ENCODE measurements at regions of chr1 and their contacts with region 1.

Region 1: GRCh38 chr1:28886731-28887418 is 27.5 kb upstream of the EPB41 start:
- DNase-seq: peak; percentile 93 to 94
- ATAC-seq: peak; percentile 68 to 84 (median 74)
- H3K4me3 ChIP-seq: peak overlapping the region; percentile 97
- H3K4me3 Mint-ChIP-seq: peak overlapping the region; percentile 89
- H3K27ac ChIP-seq: peak overlapping the region; percentile 84
- H3K27ac Mint-ChIP-seq: peak overlapping the region; percentile 88 to 93
- H3K4me1 ChIP-seq: peaks cover 41% of the 10 kb centered on the region
- H3K4me1 Mint-ChIP-seq: peaks cover 53 to 63% of the 10 kb centered on the region in 2 donors
- H3K27me3 ChIP-seq: no peaks in the 10 kb centered on the region
- H3K27me3 Mint-ChIP-seq: no peaks in the 10 kb centered on the region
- CTCF ChIP-seq: no peak

Region 2: DNA sequence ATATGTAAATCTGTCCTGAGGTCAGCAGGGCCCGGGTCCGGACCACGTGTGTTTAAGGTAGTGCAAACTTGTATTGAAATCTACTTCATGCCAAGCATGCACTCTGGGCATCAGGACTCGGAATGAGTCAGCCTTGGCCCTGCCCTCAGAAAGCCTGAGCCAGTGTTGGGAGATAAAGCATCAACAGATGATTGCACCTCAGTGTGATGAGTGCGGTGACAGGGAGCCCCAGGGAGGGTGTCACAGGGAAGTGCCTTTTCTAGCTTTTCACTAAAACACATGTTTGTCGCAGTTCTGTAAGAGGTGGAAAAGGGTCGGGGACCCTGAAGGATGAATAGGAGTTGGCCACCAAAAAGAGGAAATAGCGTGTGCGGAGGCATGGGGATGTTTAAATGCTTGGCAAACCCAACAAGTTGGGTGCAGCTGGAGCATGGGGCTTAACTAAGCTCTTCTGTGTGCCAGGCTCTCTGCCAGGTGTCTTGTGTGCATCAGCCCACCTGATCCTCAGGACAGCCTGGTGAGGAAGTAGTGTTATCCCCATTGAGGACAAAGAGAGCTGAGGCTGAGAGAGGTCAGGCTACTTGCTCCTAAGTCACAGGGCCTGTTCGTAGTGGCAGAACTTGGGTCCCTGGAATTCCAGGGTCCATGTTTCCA is 20.8 kb before region 1 on chr1:
- intact Hi-C with region 1: no loop called
- DNase-seq: no peak
- ATAC-seq: no peak
- H3K4me3 ChIP-seq: no peak overlapping the region
- H3K4me3 Mint-ChIP-seq: no peak overlapping the region
- H3K27ac ChIP-seq: no peak overlapping the region
- H3K27ac Mint-ChIP-seq: no peak overlapping the region
- H3K4me1 ChIP-seq: no peaks in the 10 kb centered on the region
- H3K4me1 Mint-ChIP-seq: no peaks in the 10 kb centered on the region
- H3K27me3 ChIP-seq: no peaks in the 10 kb centered on the region
- H3K27me3 Mint-ChIP-seq: peaks cover 8 to 10% of the 10 kb centered on the region in 2 donors
- CTCF ChIP-seq: no peak

Region 3: DNA sequence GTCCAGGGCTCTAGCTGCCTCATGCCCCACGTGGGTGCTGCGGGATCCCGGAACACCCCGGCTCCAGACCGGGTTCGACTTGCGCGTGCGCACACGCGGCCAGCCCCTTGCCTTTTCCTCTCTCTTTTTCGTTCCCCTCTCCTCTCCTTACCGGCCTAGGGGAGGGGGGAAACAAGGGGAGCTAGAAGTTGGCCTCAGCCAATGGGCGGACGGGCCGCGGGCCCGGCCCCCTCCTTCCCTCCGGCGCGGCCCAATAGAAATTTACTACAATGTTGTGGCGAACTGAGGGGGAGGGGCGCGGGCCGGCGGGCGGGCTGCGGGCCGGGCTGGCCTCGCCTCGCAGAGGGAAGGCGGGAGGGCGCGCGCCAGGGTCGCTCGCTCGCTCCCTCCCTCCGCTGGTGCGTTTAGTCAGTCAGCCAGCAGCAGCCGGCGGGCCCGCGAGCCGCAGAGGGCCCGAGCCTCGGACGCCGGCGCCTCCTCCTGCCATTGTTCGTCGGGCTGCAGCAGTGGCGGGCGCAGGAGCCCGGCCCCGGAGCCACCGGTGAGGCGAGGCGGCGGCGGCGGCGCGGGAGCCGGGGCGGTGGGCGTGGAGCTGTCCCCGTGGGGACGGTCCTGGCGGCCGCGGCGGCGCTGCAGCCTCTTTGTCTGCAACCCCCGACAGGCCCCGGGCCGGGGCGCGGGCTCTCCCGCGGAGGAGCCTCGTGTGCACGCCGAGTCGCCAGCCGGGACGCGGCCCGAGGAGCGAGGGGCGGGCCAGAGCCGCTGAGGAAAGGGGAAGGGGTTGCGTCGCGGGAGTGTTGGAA is 27.6 kb after region 1 on chr1 and contains the start of gene EPB41:
- intact Hi-C with region 1: loop called (anchors 1 kb)
- DNase-seq: peak; percentile 89 to 93
- ATAC-seq: peak; percentile 89 to 95 (median 91)
- H3K4me3 ChIP-seq: peak within 1 kb of the TSS; percentile 97
- H3K4me3 Mint-ChIP-seq: peak within 1 kb of the TSS; percentile 93
- H3K27ac ChIP-seq: peak within 1 kb of the TSS; percentile 64
- H3K27ac Mint-ChIP-seq: peak within 1 kb of the TSS; percentile 86 to 90
- H3K4me1 ChIP-seq: peaks cover 36% of the 10 kb centered on the region
- H3K4me1 Mint-ChIP-seq: peaks cover 44 to 47% of the 10 kb centered on the region in 2 donors
- H3K27me3 ChIP-seq: no peaks in the 10 kb centered on the region
- H3K27me3 Mint-ChIP-seq: no peaks in the 10 kb centered on the region
- CTCF ChIP-seq: no peak
- total RNA-seq, gene EPB41: 151 to 196 (median 172) TPM

Region 4: GRCh38 chr1:28983509-28984310 is 96.8 kb after region 1 on chr1:
- intact Hi-C with region 1: loop called (anchors 1 kb)
- DNase-seq: peak in 1 of 2 donors; percentile 44
- ATAC-seq: peak in 1 of 3 donors; percentile 42
- H3K4me3 ChIP-seq: no peak overlapping the region
- H3K4me3 Mint-ChIP-seq: no peak overlapping the region
- H3K27ac ChIP-seq: no peak overlapping the region
- H3K27ac Mint-ChIP-seq: peak overlapping the region; percentile 21 to 48
- H3K4me1 ChIP-seq: peaks cover 8% of the 10 kb centered on the region
- H3K4me1 Mint-ChIP-seq: peaks cover 54 to 61% of the 10 kb centered on the region in 2 donors
- H3K27me3 ChIP-seq: no peaks in the 10 kb centered on the region
- H3K27me3 Mint-ChIP-seq: no peaks in the 10 kb centered on the region
- CTCF ChIP-seq: no peak

Region 5: DNA sequence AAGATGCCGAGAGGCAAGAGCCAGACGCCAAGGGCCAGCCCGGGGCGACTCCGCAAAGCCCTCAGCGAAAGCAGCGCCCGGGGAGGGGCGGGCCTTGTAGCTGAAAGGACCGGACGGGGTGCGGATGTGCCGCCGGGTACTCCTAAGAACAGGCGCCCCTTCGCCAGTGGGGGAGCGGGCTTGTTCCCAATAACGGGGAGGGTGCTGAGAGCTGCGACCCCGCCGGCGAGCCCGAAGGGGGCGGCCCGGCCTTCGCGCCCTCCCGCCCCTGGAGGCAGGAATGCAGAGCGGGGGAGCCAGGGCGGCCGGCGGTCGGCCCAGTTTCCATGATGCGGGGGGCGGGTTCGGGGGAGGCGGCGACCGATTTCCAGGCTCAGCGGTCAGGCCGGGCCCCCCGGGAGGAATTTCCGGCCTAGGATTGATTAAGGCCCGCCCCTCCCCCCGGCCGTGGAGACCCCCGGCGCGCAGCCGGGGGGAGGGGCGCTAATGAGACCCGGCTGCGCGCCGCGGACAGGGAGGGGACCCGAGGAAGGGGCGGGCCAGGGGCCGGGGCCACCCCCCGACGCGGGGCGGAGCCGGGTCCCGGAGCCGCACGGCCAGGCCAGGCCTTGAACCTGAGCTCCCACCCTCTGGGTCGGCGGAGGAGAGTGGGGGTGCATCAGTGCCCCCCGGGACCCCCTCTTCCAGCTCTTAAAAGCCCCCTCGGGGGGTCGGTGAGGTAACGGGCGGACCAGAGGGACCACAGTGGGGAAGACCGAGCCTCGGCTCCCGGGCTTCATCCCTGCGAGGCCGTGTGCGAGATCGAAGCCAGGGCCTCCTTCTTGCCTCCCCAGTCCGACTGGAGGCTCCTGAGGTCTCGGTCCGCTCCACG is 237.7 kb after region 1 on chr1:
- intact Hi-C with region 1: loop called (anchors 5 kb)
- DNase-seq: peak; percentile 62 to 65
- ATAC-seq: peak; percentile 64 to 67 (median 66)
- H3K4me3 ChIP-seq: peak overlapping the region; percentile 42
- H3K4me3 Mint-ChIP-seq: peak overlapping the region; percentile 92
- H3K27ac ChIP-seq: no peak overlapping the region
- H3K27ac Mint-ChIP-seq: peak overlapping the region in 1 of 2 donors; percentile 76
- H3K4me1 ChIP-seq: peaks cover 38% of the 10 kb centered on the region
- H3K4me1 Mint-ChIP-seq: peaks cover 8 to 18% of the 10 kb centered on the region in 2 donors
- H3K27me3 ChIP-seq: peaks cover 23% of the 10 kb centered on the region
- H3K27me3 Mint-ChIP-seq: peaks cover 8 to 15% of the 10 kb centered on the region in 2 donors
- CTCF ChIP-seq: no peak

Region 6: DNA sequence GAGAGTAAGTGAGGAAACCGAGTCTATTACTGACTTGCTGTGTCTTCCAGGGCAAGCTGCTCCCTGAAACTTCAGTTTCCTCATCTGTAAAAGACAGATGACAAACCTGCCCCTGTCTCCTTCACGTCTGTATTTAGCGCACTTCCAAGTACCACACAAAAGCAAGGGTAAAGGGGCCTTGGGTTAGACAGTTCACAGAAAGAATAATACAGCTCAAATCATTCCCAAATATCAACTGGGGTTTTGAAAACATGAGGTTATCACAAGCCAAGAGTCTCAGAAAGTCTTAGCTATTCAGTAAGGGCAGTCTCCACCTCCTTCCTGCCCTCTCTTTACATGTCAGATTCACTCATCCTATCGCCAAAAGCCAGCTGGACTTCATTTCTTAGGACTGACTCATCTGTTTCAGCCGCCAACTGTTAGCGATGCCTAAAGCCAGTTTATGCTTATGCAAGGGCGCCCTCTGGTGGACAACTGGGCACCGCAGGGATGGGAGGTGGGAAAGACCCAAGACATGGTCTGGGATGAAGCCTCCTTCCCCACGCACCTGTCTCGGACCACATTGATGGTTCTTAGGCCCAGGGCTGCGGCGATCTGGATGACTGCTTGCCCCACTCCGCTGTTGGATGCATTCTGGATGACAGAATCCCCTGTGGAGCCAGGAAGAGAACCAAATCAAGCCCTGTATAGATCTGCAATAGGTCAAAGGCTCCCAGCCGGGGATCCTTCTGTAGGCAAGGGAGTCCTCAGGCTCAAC is 315.9 kb after region 1 on chr1:
- intact Hi-C with region 1: loop called (anchors 1 kb)
- DNase-seq: peak; percentile 86 to 92
- ATAC-seq: peak; percentile 92 to 98 (median 96)
- H3K4me3 ChIP-seq: no peak overlapping the region
- H3K4me3 Mint-ChIP-seq: no peak overlapping the region
- H3K27ac ChIP-seq: no peak overlapping the region
- H3K27ac Mint-ChIP-seq: peak overlapping the region in 1 of 2 donors; percentile 31
- H3K4me1 ChIP-seq: no peaks in the 10 kb centered on the region
- H3K4me1 Mint-ChIP-seq: peaks cover 0 to 4% of the 10 kb centered on the region in 2 donors
- H3K27me3 ChIP-seq: no peaks in the 10 kb centered on the region
- H3K27me3 Mint-ChIP-seq: no peaks in the 10 kb centered on the region
- CTCF ChIP-seq: peak; percentile 97